ENCODE measurements at regions of chr4 and their contacts with region 1.

Region 1: DNA sequence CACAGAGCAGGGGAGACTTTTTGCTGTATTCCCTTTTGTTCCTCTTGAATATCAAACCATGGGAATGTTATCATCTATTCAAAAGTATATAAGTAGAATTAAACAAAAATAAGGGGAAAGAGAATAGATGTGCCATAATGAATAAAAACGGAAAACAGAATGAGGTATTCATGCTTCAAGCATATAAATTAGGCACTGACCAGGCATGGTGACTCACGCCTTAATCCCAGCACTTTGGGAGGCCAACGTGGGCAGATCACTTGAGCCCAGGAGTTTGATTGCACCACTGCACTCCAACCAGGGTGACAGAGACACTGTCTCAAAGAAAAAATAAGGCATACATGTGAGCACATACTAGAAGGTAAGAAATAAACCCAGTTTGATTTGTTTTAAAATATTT is 16.3 kb upstream of the NEUROG2 start:
- DNase-seq: no peak

Region 2: DNA sequence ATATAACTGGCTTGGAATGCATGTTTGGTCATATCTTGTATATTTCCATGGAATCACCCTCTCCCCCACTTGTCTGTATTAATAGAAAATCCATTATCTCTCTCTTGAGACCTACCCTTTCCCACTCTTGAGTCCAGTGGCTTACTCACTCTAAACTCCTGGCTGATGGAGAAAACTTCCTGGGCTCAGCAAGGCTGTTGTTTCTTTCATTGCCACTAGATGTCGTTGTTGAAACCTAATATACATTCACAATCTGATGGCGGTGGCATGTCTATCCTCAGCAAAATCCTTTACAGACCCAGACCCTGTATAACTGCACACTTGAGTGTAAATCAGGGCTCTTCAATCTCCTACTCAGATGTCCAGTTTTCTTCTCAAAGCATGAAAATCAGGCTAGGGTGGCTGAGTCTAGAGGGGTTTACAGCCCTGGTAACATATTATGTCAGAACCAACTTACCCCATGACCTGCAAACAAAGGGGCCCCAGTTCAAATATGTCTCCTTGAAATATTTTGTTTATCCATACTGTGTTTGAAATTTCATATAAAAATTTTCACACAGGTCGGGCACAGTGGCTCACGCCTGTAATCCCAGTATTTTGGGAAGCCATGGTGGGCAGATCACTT is 457.0 kb before region 1 on chr4:
- in situ Hi-C with region 1: loop called (anchors 25 kb)
- DNase-seq: peak; percentile 76

Region 3: DNA sequence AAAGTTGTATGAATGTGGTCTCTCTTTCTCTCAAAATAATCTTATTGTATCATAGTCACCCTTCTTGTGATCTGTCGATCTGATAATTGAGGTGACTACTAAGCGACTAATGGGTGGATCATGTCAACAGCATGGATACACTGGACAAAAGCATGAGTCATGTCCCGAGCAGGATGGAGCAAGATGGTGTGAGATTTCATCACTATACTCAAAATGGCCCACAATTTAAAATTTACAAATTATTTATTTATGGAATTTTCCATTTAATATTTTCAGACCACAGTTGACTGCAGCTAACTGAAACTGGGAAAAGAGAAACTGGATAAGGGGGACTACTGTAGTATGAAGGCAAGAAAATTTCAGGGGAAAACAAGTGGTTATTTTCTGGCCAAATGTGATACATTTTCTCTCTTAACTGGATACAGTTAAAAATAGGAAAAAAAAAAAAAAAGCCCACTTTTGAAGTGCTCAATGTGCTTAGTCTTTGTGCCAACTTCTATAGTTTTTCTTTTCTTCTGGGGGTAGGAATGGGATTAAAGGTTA is 361.7 kb before region 1 on chr4:
- in situ Hi-C with region 1: no loop called
- DNase-seq: no peak